Vagina (tissue), 2 donors: ENCODE measurements at regions of chr7 and their contacts with region 1.

Region 1: DNA sequence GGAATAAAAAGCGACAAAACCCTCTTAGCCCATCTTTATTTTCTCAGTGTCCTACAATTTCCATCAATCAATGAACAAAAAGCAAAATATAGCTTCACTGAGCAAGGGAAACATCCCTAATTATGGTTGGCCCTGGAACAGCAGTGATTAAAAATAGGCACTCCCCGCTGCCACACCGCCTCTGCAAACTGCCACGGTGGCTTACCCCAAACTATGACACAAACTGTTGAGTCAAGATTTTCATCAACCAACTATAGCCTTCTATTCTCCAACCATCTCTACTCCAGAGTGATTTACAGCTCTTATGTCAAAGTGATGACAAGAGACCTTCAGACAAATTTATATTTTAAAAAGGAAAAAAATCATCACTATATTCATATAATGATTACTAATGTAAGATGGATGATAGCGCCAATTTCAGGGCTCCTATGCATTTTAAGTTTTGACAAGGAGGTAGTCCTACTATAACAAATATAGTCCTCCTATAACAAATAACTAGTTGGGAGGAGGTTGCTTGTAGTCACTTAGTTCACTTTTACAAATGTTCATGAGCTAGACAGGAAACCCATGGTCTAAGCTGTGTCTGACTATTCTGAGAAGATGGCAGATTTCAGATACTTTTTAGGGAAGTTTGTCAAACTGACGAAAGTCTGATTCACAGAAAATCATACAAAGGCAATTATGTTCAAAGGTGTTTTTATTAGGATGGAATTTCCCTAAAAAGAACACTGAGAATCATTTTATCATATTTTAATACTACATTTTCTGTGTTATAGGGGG is 26.3 kb downstream of the DENND11 start:
- DNase-seq: no peak
- H3K4me3 ChIP-seq: no peak overlapping the region
- H3K27ac ChIP-seq: no peak overlapping the region
- H3K4me1 ChIP-seq: no peaks in the 10 kb centered on the region
- H3K27me3 ChIP-seq: no peaks in the 10 kb centered on the region
- CTCF ChIP-seq: no peak
- POLR2A ChIP-seq: no peak

Region 2: DNA sequence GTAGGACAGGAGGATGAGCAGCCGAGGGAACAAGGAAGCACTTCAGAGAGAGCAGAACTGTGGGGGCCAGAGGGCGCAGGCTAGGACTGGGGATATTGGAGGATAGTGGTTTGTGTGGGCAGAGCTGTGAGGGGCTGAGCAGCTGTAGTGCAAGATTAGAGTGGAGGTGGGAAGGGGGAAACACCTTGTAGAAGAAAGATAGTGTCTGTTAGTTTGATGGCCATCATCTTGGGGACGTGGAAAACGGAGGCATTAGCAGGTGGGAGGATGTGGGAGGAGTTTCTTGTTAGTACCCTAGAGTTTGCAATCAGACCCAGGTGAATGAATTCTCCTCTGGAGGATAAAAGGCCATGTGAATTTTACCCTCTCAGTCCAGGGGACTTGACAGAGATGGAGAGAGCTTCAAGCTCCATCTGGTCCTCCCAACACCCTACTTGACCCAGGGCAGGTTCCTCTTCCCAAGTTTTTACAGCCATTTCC is 1129.1 kb after region 1 on chr7:
- intact Hi-C with region 1: loop called (anchors 5 kb)
- DNase-seq: no peak
- H3K4me3 ChIP-seq: no peak overlapping the region
- H3K27ac ChIP-seq: no peak overlapping the region
- H3K4me1 ChIP-seq: no peaks in the 10 kb centered on the region
- H3K27me3 ChIP-seq: no peaks in the 10 kb centered on the region
- CTCF ChIP-seq: no peak
- POLR2A ChIP-seq: no peak